Caco-2 (cell line): ENCODE measurements at regions of chr7 and their contacts with region 1.

Region 1: DNA sequence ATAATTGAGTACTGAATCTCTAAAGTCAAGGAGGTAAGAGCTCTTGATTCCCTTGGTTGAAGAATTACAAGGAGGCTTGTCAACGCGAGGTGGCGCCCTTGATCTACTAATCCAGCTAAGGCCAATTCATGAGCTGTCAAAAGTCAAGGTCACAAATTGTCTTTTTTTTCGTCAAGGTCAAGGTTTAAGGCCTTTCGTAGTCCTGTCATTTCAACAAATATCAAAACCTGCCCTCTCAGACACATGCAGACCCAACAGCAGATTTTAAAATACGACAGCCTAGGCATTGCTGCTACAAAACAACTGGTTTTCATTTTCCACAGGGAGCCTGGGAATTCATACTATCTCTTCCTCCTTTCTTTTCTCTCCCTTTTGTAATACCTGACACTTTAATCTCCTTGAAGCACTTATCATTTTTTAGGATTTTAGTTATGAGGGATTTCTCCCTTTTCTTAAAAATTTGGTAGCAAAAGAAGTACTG is 3.6 kb downstream of the HOXA13 start:
- DNase-seq: peak; percentile 73 to 82
- H3K4me3 ChIP-seq: no peak overlapping the region
- H3K4me3 Mint-ChIP-seq: no peak overlapping the region
- H3K27ac Mint-ChIP-seq: no peak overlapping the region
- H3K4me1 ChIP-seq: peaks cover 8% of the 10 kb centered on the region
- H3K4me1 Mint-ChIP-seq: no peaks in the 10 kb centered on the region
- H3K27me3 ChIP-seq: peaks cover 2% of the 10 kb centered on the region
- H3K27me3 Mint-ChIP-seq: peaks cover 10% of the 10 kb centered on the region
- CTCF ChIP-seq: peak; percentile 78 to 83

Region 2: GRCh38 chr7:27235387-27236311 is 39.3 kb after region 1 on chr7:
- CTCF ChIA-PET with region 1: interaction called, 11 read pairs
- POLR2A ChIA-PET with region 1: no interaction called
- intact Hi-C with region 1: no loop called
- DNase-seq: peak; percentile 81 to 86
- H3K4me3 ChIP-seq: peak overlapping the region; percentile 70
- H3K4me3 Mint-ChIP-seq: peak overlapping the region; percentile 77
- H3K27ac Mint-ChIP-seq: peak overlapping the region; percentile 32
- H3K4me1 ChIP-seq: no peaks in the 10 kb centered on the region; the same call in 1 of the 2 replicates
- H3K4me1 Mint-ChIP-seq: no peaks in the 10 kb centered on the region
- H3K27me3 ChIP-seq: no peaks in the 10 kb centered on the region
- H3K27me3 Mint-ChIP-seq: no peaks in the 10 kb centered on the region
- CTCF ChIP-seq: peak; percentile 69 to 79

Region 3: DNA sequence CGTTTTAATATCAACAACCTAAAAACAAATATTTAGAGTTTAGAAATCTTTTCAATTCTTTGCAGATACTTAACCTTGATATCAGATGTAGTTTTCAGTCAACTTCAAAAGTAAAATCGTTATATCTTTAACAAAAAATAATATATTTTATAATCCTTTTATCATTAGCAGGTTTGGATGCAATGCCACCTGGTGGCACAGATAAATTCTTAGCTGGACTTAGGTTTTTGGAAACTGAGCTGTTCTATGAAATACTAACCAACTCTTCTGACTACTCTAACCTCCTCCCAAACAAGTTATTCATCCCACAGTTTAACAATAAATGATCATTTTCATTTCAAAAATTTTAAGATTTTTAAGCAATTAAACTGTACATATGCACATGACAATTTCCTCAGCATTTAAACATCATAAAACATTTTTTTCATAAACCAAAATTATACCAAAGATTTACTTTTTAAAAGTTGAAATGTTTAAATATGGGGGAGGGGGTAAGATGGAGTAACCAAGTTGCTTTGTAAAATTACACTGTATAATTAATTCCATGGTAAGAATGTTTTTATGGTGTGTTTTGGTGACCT is 409.5 kb after region 1 on chr7:
- CTCF ChIA-PET with region 1: interaction called, 24 read pairs
- POLR2A ChIA-PET with region 1: no interaction called
- intact Hi-C with region 1: loop called (anchors 2 kb)
- DNase-seq: peak in 1 of 2 experiments; percentile 33
- H3K4me3 ChIP-seq: no peak overlapping the region
- H3K4me3 Mint-ChIP-seq: no peak overlapping the region
- H3K27ac Mint-ChIP-seq: peak overlapping the region; percentile 16
- H3K4me1 ChIP-seq: peaks cover 33% of the 10 kb centered on the region
- H3K4me1 Mint-ChIP-seq: no peaks in the 10 kb centered on the region
- H3K27me3 ChIP-seq: no peaks in the 10 kb centered on the region
- H3K27me3 Mint-ChIP-seq: no peaks in the 10 kb centered on the region
- CTCF ChIP-seq: peak; percentile 42 to 52

Region 4: DNA sequence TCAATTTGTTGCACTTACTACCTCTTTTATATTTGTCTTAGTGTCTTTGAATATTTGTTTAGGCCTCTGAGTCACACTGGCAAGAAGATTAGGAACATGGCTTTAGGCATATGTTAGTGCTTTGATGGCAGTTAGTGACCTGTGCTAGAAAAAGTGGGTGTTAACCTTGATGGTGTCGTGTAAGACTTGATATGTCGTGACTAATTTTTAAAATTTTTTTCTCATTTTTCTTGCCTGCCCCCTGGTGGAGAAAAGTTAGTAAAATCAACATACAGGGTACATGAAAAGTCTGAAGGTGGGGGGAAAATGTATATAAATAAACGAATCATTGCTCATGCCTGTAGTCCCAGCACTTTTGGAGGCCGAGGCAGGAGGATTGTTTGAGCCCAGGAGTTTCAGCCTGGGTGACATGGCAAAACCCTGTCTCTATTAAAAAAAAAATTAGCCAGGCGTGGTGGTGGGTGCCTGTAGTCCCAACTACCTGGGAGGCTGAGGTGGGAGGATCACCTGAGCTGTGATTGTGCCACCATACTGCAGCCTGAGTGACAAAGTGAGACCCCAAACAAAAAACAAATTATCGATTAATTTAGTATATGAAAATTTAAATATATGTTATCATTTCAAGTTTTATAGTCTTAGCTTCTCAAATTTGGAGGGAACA is 588.2 kb after region 1 on chr7:
- CTCF ChIA-PET with region 1: no interaction called
- POLR2A ChIA-PET with region 1: no interaction called
- intact Hi-C with region 1: loop called (anchors 5 kb)
- DNase-seq: peak in 1 of 2 experiments; percentile 62
- H3K4me3 ChIP-seq: no peak overlapping the region
- H3K4me3 Mint-ChIP-seq: no peak overlapping the region
- H3K27ac Mint-ChIP-seq: no peak overlapping the region
- H3K4me1 ChIP-seq: peaks cover 7% of the 10 kb centered on the region; the same call in 1 of the 2 replicates
- H3K4me1 Mint-ChIP-seq: peaks cover 6% of the 10 kb centered on the region
- H3K27me3 ChIP-seq: no peaks in the 10 kb centered on the region
- H3K27me3 Mint-ChIP-seq: no peaks in the 10 kb centered on the region
- CTCF ChIP-seq: peak; percentile 55 to 74

Region 5: GRCh38 chr7:28020302-28020940 is 824.1 kb after region 1 on chr7:
- CTCF ChIA-PET with region 1: no interaction called
- POLR2A ChIA-PET with region 1: no interaction called
- intact Hi-C with region 1: loop called (anchors 1 kb)
- DNase-seq: peak; percentile 76 to 77
- H3K4me3 ChIP-seq: no peak overlapping the region
- H3K4me3 Mint-ChIP-seq: peak overlapping the region; percentile 43
- H3K27ac Mint-ChIP-seq: no peak overlapping the region
- H3K4me1 ChIP-seq: peaks cover 3% of the 10 kb centered on the region; the same call in 1 of the 2 replicates
- H3K4me1 Mint-ChIP-seq: no peaks in the 10 kb centered on the region
- H3K27me3 ChIP-seq: no peaks in the 10 kb centered on the region; the same call in 1 of the 2 replicates
- H3K27me3 Mint-ChIP-seq: no peaks in the 10 kb centered on the region
- CTCF ChIP-seq: peak; percentile 87 to 88